ENCODE measurements at regions of chr2 and their contacts with region 1.

Region 1: DNA sequence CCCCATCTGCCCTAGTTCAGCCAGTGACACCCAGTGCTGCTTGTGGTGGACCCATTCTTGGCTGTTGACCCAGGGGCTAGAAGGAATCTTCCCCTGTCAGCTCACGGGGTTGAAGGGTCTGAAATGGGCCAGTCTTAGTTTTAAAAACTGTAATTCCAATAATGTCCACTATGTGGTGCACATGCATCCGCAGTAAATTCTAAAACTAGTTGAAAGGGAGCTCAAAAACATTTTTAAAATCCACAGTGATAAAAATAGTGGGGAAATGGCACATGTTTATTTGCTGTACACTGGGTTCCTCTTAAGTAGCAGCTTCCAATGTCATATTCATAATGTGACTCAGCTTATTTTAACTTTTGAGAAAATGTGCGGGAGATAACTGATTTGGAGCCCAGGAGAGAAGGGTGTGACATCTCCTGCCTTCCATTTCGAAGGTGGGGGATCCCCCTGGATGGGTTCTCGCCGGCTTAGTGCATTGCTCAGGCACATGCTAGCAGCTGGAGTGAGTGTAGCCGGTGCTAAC is 32.8 kb downstream of the GRHL1 start:
- DNase-seq: peak; percentile 13
- ATAC-seq: peak; percentile 88
- H3K4me3 ChIP-seq: no peak overlapping the region
- H3K27ac ChIP-seq: no peak overlapping the region
- H3K4me1 ChIP-seq: no peaks in the 10 kb centered on the region
- H3K27me3 ChIP-seq: no peaks in the 10 kb centered on the region
- CTCF ChIP-seq: peak; percentile 59 to 70 (median 63)
- EP300 ChIP-seq: no peak
- POLR2A ChIP-seq: no peak
- RAD21 ChIP-seq: peak; percentile 60

Region 2: GRCh38 chr2:9813312-9814133 is 170.8 kb before region 1 on chr2:
- CTCF ChIA-PET with region 1: interaction called, 34 read pairs
- POLR2A ChIA-PET with region 1: no interaction called
- RAD21 ChIA-PET with region 1: interaction called, 14 read pairs
- SMC1A ChIA-PET with region 1: interaction called, 8 read pairs
- in situ Hi-C with region 1: no loop called
- intact Hi-C with region 1: no loop called
- DNase-seq: no peak
- ATAC-seq: peak; percentile 98
- H3K4me3 ChIP-seq: no peak overlapping the region
- H3K27ac ChIP-seq: no peak overlapping the region
- H3K4me1 ChIP-seq: no peaks in the 10 kb centered on the region
- H3K27me3 ChIP-seq: no peaks in the 10 kb centered on the region; a peak in 2 of 4 replicates
- CTCF ChIP-seq: peak; percentile 95 to 96 (median 96)
- EP300 ChIP-seq: no peak
- POLR2A ChIP-seq: no peak
- RAD21 ChIP-seq: peak; percentile 85

Region 3: GRCh38 chr2:9961013-9961412 is 23.3 kb before region 1 on chr2:
- CTCF ChIA-PET with region 1: interaction called, 17 read pairs
- POLR2A ChIA-PET with region 1: no interaction called
- RAD21 ChIA-PET with region 1: no interaction called
- SMC1A ChIA-PET with region 1: interaction called, 4 read pairs
- in situ Hi-C with region 1: no loop called
- intact Hi-C with region 1: no loop called
- DNase-seq: no peak
- ATAC-seq: no peak
- H3K4me3 ChIP-seq: no peak overlapping the region
- H3K27ac ChIP-seq: no peak overlapping the region
- H3K4me1 ChIP-seq: peaks cover 6% of the 10 kb centered on the region
- H3K27me3 ChIP-seq: no peaks in the 10 kb centered on the region
- CTCF ChIP-seq: no peak
- EP300 ChIP-seq: no peak
- POLR2A ChIP-seq: no peak
- RAD21 ChIP-seq: no peak

Region 4: GRCh38 chr2:10000541-10000940 is 16.3 kb after region 1 on chr2:
- CTCF ChIA-PET with region 1: interaction called, 55 read pairs
- POLR2A ChIA-PET with region 1: no interaction called
- RAD21 ChIA-PET with region 1: interaction called, 8 read pairs
- SMC1A ChIA-PET with region 1: interaction called, 10 read pairs
- in situ Hi-C with region 1: no loop called
- intact Hi-C with region 1: no loop called
- DNase-seq: no peak
- ATAC-seq: no peak
- H3K4me3 ChIP-seq: no peak overlapping the region
- H3K27ac ChIP-seq: no peak overlapping the region
- H3K4me1 ChIP-seq: no peaks in the 10 kb centered on the region
- H3K27me3 ChIP-seq: no peaks in the 10 kb centered on the region
- CTCF ChIP-seq: no peak
- EP300 ChIP-seq: no peak
- POLR2A ChIP-seq: no peak
- RAD21 ChIP-seq: no peak

Region 5: DNA sequence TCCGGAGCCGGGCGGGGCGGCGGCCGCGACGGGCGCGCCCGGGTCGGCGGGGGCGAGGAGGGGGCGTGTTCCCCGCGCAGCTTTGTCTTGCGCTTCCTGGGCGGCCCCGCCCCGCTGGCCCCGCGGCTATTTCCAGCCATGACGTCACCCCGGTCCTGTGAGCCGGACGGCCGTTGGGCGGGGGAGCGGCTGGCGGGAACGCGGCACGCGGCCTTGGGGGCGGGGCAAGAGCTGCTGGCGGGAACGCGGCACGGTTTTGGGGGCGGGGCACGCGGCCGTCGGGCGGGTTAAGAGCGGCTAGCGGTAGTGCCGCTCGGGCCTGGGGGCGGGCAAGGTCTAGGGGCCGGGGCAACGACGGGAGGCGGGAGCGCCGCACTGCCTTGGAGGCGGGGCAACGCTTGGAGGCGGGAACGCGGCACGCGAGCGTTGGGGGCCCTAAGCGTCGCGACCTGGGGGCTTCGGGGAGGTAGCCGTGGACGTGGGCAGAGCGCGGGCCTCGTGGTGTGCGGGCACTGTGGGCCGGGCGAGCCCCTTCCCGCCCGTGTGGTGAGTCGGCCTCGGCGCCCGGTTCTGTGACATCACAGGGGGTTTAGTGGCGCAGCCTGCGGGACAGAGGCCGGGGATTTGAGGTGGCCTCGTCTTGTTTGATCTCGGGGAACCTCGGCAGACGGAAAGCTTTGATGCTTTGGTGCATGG is 59.8 kb after region 1 on chr2:
- CTCF ChIA-PET with region 1: interaction called, 164 read pairs
- POLR2A ChIA-PET with region 1: interaction called, 4 read pairs
- RAD21 ChIA-PET with region 1: interaction called, 70 read pairs
- SMC1A ChIA-PET with region 1: interaction called, 46 read pairs
- in situ Hi-C with region 1: no loop called
- intact Hi-C with region 1: loop called (anchors 1 kb)
- DNase-seq: no peak
- ATAC-seq: peak; percentile 54
- H3K4me3 ChIP-seq: no peak overlapping the region
- H3K27ac ChIP-seq: no peak overlapping the region
- H3K4me1 ChIP-seq: no peaks in the 10 kb centered on the region
- H3K27me3 ChIP-seq: peaks cover 0 to 4% of the 10 kb centered on the region in 2 experiments; a peak in 1 of 4 replicates
- CTCF ChIP-seq: no peak
- EP300 ChIP-seq: no peak
- POLR2A ChIP-seq: no peak
- RAD21 ChIP-seq: no peak

Region 6: GRCh38 chr2:10091182-10091888 is 107.1 kb after region 1 on chr2:
- CTCF ChIA-PET with region 1: interaction called, 25 read pairs
- POLR2A ChIA-PET with region 1: interaction called, 3 read pairs
- RAD21 ChIA-PET with region 1: interaction called, 10 read pairs
- SMC1A ChIA-PET with region 1: interaction called, 9 read pairs
- in situ Hi-C with region 1: no loop called
- intact Hi-C with region 1: no loop called
- DNase-seq: no peak
- ATAC-seq: peak; percentile 71
- H3K4me3 ChIP-seq: no peak overlapping the region; the same call in 1 of the 2 replicates
- H3K27ac ChIP-seq: no peak overlapping the region
- H3K4me1 ChIP-seq: peaks cover 18% of the 10 kb centered on the region
- H3K27me3 ChIP-seq: no peaks in the 10 kb centered on the region
- CTCF ChIP-seq: peak in 1 of 3 experiments; percentile 29; a peak in 1 of 6 replicates
- EP300 ChIP-seq: no peak
- POLR2A ChIP-seq: no peak
- RAD21 ChIP-seq: no peak

Measured in GM12878 (cell line).